Activated T-helper 1 cell treated with anti-CD3 and anti-CD28 coated beads, Interleukin-12 subunit alpha, Interleukin-12 subunit beta, Interleukin-2, Interleukin-4 antibody, amounts not matched to agents 30 ng/mL and 10 ng/mL and 1 ng/mL, durations not matched to agents 14 hours and 24 hours and 36 hours (primary cell): ENCODE measurements at regions of chr9 and their contacts with region 1.

Region 1: GRCh38 chr9:102669220-102669619 is 325.9 kb upstream of the CYLC2 start:
- DNase-seq: no peak
- H3K4me3 Mint-ChIP-seq: no peak overlapping the region
- H3K27ac Mint-ChIP-seq: no peak overlapping the region
- H3K4me1 Mint-ChIP-seq: no peaks in the 10 kb centered on the region
- H3K27me3 Mint-ChIP-seq: no peaks in the 10 kb centered on the region

Region 2: DNA sequence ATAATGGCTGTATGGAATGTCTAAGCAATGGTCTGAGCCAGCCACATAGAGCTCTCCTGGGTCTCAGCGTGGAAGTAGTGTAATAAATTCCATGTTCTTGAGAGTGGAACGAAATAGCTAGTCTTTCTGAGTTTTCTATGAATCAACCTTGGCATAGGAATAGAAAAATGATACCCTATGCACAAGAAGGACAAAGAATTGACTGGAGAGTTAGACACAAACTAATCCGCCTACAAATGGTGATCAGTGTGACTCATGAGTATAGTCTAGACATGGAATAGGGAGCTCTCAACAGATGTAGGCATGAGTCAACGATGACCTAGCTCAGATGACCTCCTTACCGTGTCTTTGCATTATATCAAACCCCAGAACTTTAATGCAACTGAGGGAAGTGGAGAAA is 674.0 kb before region 1 on chr9:
- intact Hi-C with region 1: no loop called
- DNase-seq: no peak
- H3K4me3 Mint-ChIP-seq: no peak overlapping the region
- H3K27ac Mint-ChIP-seq: no peak overlapping the region
- H3K4me1 Mint-ChIP-seq: no peaks in the 10 kb centered on the region
- H3K27me3 Mint-ChIP-seq: no peaks in the 10 kb centered on the region

Region 3: GRCh38 chr9:102609461-102609860 is 59.8 kb before region 1 on chr9:
- intact Hi-C with region 1: loop called (anchors 10 kb)
- DNase-seq: no peak
- H3K4me3 Mint-ChIP-seq: no peak overlapping the region
- H3K27ac Mint-ChIP-seq: no peak overlapping the region
- H3K4me1 Mint-ChIP-seq: no peaks in the 10 kb centered on the region
- H3K27me3 Mint-ChIP-seq: no peaks in the 10 kb centered on the region